ENCODE measurements at regions of chr15 and their contacts with region 1.

Region 1: DNA sequence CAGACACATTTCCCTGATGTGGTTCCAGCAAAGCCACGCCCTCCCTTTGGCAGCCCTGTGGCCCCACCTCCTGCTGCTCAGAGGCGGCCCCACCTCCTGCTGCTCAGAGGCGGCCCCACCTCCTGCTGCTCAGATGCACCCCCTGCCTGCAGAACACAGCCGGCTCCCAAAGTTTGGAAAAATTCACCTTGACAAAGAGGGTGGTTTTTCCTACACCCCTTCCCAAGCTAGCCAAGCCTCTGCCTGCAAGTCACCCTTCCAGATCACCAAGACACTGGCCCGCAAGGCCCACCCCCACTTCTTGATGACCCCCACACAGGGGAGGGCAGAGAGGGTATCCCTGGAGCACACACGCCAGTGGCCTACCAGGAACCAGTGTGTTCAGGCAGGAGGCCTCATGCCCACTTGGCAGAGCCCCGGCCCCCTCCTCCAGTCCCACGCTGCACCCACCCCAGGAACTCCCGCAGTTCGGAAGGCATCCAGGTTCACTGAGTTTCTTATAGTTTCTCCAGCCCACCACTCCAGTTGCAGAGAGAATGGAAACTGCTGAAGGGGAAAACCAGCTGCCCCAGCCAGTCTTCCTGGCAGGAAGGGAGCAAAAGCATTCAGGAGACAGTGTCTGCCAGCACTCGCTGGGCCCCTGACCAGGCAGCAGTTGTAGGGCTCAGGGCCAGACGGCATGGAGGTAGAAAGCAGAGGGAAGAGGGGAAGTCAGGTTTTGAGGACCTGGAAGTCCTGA is 2.3 kb upstream of the HAPLN3 start:
- DNase-seq: peak; percentile 61 to 89 (median 81)
- ATAC-seq: peak; percentile 85
- H3K4me3 ChIP-seq: peak overlapping the region in 1 of 2 experiments; percentile 20
- H3K4me3 Mint-ChIP-seq: peak overlapping the region; percentile 63
- H3K27ac ChIP-seq: no peak overlapping the region
- H3K27ac Mint-ChIP-seq: no peak overlapping the region
- H3K4me1 ChIP-seq: peaks cover 38% of the 10 kb centered on the region
- H3K4me1 Mint-ChIP-seq: peaks cover 37% of the 10 kb centered on the region
- H3K27me3 ChIP-seq: peaks cover 0 to 5% of the 10 kb centered on the region in 2 experiments
- H3K27me3 Mint-ChIP-seq: no peaks in the 10 kb centered on the region
- CTCF ChIP-seq: peak; percentile 38

Region 2: GRCh38 chr15:88546248-88547129 is 351.1 kb before region 1 on chr15 and contains the start of gene DET1:
- CTCF ChIA-PET with region 1: no interaction called
- POLR2A ChIA-PET with region 1: no interaction called
- intact Hi-C with region 1: loop called in 1 of 2 experiments (anchors 10 kb)
- DNase-seq: peak; percentile 87 to 98 (median 94)
- ATAC-seq: peak; percentile 91
- H3K4me3 ChIP-seq: peak within 1 kb of the TSS; percentile 60 to 62
- H3K4me3 Mint-ChIP-seq: peak within 1 kb of the TSS; percentile 91
- H3K27ac ChIP-seq: peak within 1 kb of the TSS; percentile 72 to 80
- H3K27ac Mint-ChIP-seq: peak within 1 kb of the TSS; percentile 96
- H3K4me1 ChIP-seq: peaks cover 6% of the 10 kb centered on the region
- H3K4me1 Mint-ChIP-seq: peaks cover 18% of the 10 kb centered on the region
- H3K27me3 ChIP-seq: no peaks in the 10 kb centered on the region
- H3K27me3 Mint-ChIP-seq: no peaks in the 10 kb centered on the region
- CTCF ChIP-seq: peak; percentile 70
- total RNA-seq, gene DET1: 1.4 to 2.0 TPM

Region 3: GRCh38 chr15:88913017-88913849 is 15.6 kb after region 1 on chr15 and contains the start of gene MFGE8:
- CTCF ChIA-PET with region 1: interaction called, 4 read pairs
- POLR2A ChIA-PET with region 1: interaction called, 4 read pairs
- intact Hi-C with region 1: loop called in 1 of 2 experiments (anchors 1 kb)
- DNase-seq: peak; percentile 43 to 84 (median 71)
- ATAC-seq: peak; percentile 93
- H3K4me3 ChIP-seq: peak within 1 kb of the TSS; percentile 53 to 71
- H3K4me3 Mint-ChIP-seq: peak within 1 kb of the TSS; percentile 91
- H3K27ac ChIP-seq: peak within 1 kb of the TSS; percentile 28 to 45
- H3K27ac Mint-ChIP-seq: peak within 1 kb of the TSS; percentile 92
- H3K4me1 ChIP-seq: peaks cover 12% of the 10 kb centered on the region
- H3K4me1 Mint-ChIP-seq: peaks cover 28% of the 10 kb centered on the region
- H3K27me3 ChIP-seq: no peaks in the 10 kb centered on the region
- H3K27me3 Mint-ChIP-seq: peaks cover 2% of the 10 kb centered on the region
- CTCF ChIP-seq: no peak
- total RNA-seq, gene MFGE8: 62.9 to 70.0 TPM

Region 4: GRCh38 chr15:89057504-89058133 is 160.0 kb after region 1 on chr15:
- CTCF ChIA-PET with region 1: interaction called, 5 read pairs
- POLR2A ChIA-PET with region 1: no interaction called
- intact Hi-C with region 1: loop called in 1 of 2 experiments (anchors 1 kb)
- DNase-seq: peak; percentile 61 to 90 (median 82)
- ATAC-seq: peak; percentile 100
- H3K4me3 ChIP-seq: no peak overlapping the region
- H3K4me3 Mint-ChIP-seq: no peak overlapping the region
- H3K27ac ChIP-seq: no peak overlapping the region
- H3K27ac Mint-ChIP-seq: no peak overlapping the region
- H3K4me1 ChIP-seq: no peaks in the 10 kb centered on the region
- H3K4me1 Mint-ChIP-seq: peaks cover 2% of the 10 kb centered on the region
- H3K27me3 ChIP-seq: no peaks in the 10 kb centered on the region
- H3K27me3 Mint-ChIP-seq: no peaks in the 10 kb centered on the region
- CTCF ChIP-seq: peak; percentile 99

Region 5: GRCh38 chr15:89129123-89129815 is 231.6 kb after region 1 on chr15:
- CTCF ChIA-PET with region 1: interaction called, 13 read pairs
- POLR2A ChIA-PET with region 1: no interaction called
- intact Hi-C with region 1: loop called (anchors 1 kb)
- DNase-seq: peak; percentile 14 to 75 (median 66)
- ATAC-seq: peak; percentile 73
- H3K4me3 ChIP-seq: no peak overlapping the region
- H3K4me3 Mint-ChIP-seq: no peak overlapping the region
- H3K27ac ChIP-seq: peak overlapping the region in 1 of 2 experiments; percentile 79
- H3K27ac Mint-ChIP-seq: no peak overlapping the region
- H3K4me1 ChIP-seq: peaks cover 9% of the 10 kb centered on the region
- H3K4me1 Mint-ChIP-seq: peaks cover 23% of the 10 kb centered on the region
- H3K27me3 ChIP-seq: no peaks in the 10 kb centered on the region
- H3K27me3 Mint-ChIP-seq: no peaks in the 10 kb centered on the region
- CTCF ChIP-seq: peak; percentile 75

Region 6: GRCh38 chr15:89243691-89244471 is 346.3 kb after region 1 on chr15 and contains the start of gene FANCI:
- CTCF ChIA-PET with region 1: no interaction called
- POLR2A ChIA-PET with region 1: no interaction called
- intact Hi-C with region 1: loop called in 1 of 2 experiments (anchors 5 kb)
- DNase-seq: peak; percentile 93 to 98 (median 97)
- ATAC-seq: peak; percentile 98
- H3K4me3 ChIP-seq: peak within 1 kb of the TSS; percentile 77 to 85
- H3K4me3 Mint-ChIP-seq: peak within 1 kb of the TSS; percentile 95
- H3K27ac ChIP-seq: peak within 1 kb of the TSS; percentile 24 to 52
- H3K27ac Mint-ChIP-seq: peak within 1 kb of the TSS; percentile 90
- H3K4me1 ChIP-seq: peaks cover 15% of the 10 kb centered on the region
- H3K4me1 Mint-ChIP-seq: peaks cover 25% of the 10 kb centered on the region
- H3K27me3 ChIP-seq: no peaks in the 10 kb centered on the region
- H3K27me3 Mint-ChIP-seq: no peaks in the 10 kb centered on the region
- CTCF ChIP-seq: no peak
- total RNA-seq, gene FANCI: 5.1 to 6.3 TPM

Region 7: DNA sequence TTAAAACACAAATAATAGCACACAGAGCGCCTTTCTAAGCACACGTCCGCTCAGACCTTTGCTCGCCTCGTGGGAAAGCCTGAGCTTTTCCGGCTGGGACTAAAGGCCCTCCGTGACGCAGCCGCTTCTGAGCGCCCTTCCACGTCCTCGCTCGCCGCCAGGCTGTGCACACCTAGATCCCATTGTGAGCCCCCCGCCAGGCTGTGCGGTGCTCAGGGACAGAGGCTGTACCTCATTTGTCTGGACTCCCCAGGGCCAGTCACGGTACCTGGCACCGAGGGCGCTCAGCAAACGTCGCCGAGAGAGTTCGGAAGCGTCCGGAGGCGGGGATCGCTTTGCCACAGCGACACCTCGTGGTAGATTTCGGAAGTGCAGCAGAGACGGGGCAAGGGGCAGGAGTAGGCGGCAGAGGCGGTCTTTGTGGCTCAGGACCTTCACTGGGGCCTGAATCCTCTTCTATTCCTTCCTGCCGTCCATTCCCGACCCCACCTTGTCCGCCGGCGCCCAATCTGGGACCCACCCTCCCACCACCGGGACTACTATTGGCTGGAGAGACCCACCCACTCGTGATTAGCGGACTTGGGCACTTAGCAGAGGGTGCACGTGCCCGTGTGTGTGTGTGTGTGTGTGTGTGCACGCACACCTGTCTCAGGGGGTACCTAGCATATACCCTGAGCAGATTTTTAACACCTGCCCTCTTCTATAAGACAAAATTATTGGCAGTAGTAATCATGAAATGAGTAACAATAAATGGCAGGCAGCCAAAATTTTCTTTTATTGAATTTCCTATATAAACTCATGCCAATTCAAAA is 533.1 kb after region 1 on chr15:
- CTCF ChIA-PET with region 1: no interaction called
- POLR2A ChIA-PET with region 1: no interaction called
- intact Hi-C with region 1: loop called in 1 of 2 experiments (anchors 5 kb)
- DNase-seq: peak; percentile 75 to 95 (median 84)
- ATAC-seq: peak; percentile 95
- H3K4me3 ChIP-seq: peak overlapping the region; percentile 38 to 49
- H3K4me3 Mint-ChIP-seq: peak overlapping the region; percentile 79
- H3K27ac ChIP-seq: no peak overlapping the region
- H3K27ac Mint-ChIP-seq: no peak overlapping the region
- H3K4me1 ChIP-seq: no peaks in the 10 kb centered on the region
- H3K4me1 Mint-ChIP-seq: peaks cover 6% of the 10 kb centered on the region
- H3K27me3 ChIP-seq: peaks cover 0 to 4% of the 10 kb centered on the region in 2 experiments
- H3K27me3 Mint-ChIP-seq: peaks cover 23% of the 10 kb centered on the region
- CTCF ChIP-seq: peak; percentile 92

Measured in CD8-positive, alpha-beta T cell (primary cell).